ENCODE measurements at regions of chr1 and their contacts with region 1.

Region 1: DNA sequence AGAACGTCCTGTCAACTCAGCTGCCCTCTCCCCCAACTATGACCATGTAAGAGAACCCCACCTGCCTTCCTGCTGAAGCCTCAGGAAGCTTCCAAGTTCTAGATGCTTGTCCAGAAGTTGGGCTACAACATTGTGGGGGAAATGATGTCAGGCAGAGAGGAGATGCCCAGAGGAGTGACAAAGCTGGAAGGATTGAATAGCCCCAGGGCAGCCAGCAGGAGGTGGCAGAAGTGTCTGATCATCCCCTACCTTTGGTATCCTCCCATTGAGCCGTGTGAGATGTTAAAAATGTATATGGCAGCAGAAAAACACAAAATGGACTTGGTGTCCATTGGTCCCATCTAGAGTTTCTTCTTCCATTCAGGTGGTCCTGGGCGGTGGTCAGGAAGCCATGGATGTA is 6.6 kb downstream of the EIF3I start:
- DNase-seq: no peak
- H3K4me3 ChIP-seq: no peak overlapping the region
- H3K27ac ChIP-seq: no peak overlapping the region
- H3K4me1 ChIP-seq: peaks cover 0 to 4% (median under 1%) of the 10 kb centered on the region in 4 experiments
- H3K27me3 ChIP-seq: no peaks in the 10 kb centered on the region

Region 2: GRCh38 chr1:32200226-32201010 is 28.4 kb before region 1 on chr1 and contains the start of gene CCDC28B:
- CTCF ChIA-PET with region 1: no interaction called
- POLR2A ChIA-PET with region 1: no interaction called
- DNase-seq: peak in 2 of 3 donors; percentile 55 to 66
- H3K4me3 ChIP-seq: peak within 1 kb of the TSS; percentile 44 to 80 (median 67)
- H3K27ac ChIP-seq: peak within 1 kb of the TSS; percentile 51 to 67
- H3K4me1 ChIP-seq: peaks cover 3 to 47% (median 41%) of the 10 kb centered on the region in 4 experiments
- H3K27me3 ChIP-seq: no peaks in the 10 kb centered on the region

Region 3: GRCh38 chr1:32240140-32240951 is 11.6 kb after region 1 on chr1:
- CTCF ChIA-PET with region 1: interaction called, 22 read pairs
- POLR2A ChIA-PET with region 1: interaction called, 5 read pairs
- DNase-seq: peak; percentile 49 to 62 (median 54)
- H3K4me3 ChIP-seq: peak overlapping the region; percentile 29 to 79 (median 65)
- H3K27ac ChIP-seq: no peak overlapping the region
- H3K4me1 ChIP-seq: peaks cover 0 to 25% (median 18%) of the 10 kb centered on the region in 4 experiments
- H3K27me3 ChIP-seq: peaks cover 0 to 5% (median 0%) of the 10 kb centered on the region in 5 experiments

Measured in common myeloid progenitor, CD34-positive (primary cell).